Ovary (tissue), 10 donors: ENCODE measurements at regions of chrX and their contacts with region 1.

Region 1: DNA sequence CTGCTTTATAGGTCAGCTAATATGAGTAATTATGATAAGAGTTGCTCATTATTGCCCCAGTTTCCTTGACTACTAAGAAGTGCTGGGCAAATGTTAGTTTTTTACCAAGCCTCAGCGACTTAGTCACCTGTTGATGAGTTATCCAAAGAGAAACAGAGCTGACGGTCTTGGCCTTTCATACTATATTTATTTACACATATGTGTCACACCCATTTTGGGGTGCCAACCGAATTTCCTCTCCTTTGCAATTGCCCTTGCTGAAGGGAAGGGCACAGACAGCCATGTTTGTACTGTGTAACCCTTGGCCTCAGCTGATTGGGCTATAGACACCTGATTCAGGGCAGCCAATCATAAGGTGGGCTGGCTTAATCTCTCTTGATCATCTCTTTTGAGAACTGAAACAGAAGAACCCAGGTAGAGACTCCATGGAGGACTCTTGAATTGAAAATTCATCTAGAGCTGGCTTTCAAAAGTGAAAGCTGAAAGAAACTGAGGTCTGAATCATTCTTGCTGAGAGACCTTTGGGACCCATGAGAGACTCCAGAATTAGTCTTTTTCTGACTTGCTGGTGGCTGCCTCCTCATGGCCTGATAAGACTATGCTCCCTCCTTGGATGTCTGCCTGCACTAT is 111.7 kb upstream of the RPS6KA3 start:
- DNase-seq: no peak
- H3K4me3 ChIP-seq: no peak overlapping the region
- H3K27ac ChIP-seq: no peak overlapping the region
- H3K4me1 ChIP-seq: no peaks in the 10 kb centered on the region
- H3K27me3 ChIP-seq: no peaks in the 10 kb centered on the region
- CTCF ChIP-seq: no peak
- EP300 ChIP-seq: no peak
- POLR2A ChIP-seq: no peak

Region 2: GRCh38 chrX:20205927-20206708 is 172.3 kb before region 1 on chrX:
- intact Hi-C with region 1: loop called in 1 of 4 experiments (anchors 10 kb)
- DNase-seq: no peak
- H3K4me3 ChIP-seq: no peak overlapping the region
- H3K27ac ChIP-seq: no peak overlapping the region
- H3K4me1 ChIP-seq: no peaks in the 10 kb centered on the region
- H3K27me3 ChIP-seq: no peaks in the 10 kb centered on the region
- CTCF ChIP-seq: no peak
- EP300 ChIP-seq: no peak
- POLR2A ChIP-seq: no peak